ENCODE measurements at regions of chr18 and their contacts with region 1.

Region 1: DNA sequence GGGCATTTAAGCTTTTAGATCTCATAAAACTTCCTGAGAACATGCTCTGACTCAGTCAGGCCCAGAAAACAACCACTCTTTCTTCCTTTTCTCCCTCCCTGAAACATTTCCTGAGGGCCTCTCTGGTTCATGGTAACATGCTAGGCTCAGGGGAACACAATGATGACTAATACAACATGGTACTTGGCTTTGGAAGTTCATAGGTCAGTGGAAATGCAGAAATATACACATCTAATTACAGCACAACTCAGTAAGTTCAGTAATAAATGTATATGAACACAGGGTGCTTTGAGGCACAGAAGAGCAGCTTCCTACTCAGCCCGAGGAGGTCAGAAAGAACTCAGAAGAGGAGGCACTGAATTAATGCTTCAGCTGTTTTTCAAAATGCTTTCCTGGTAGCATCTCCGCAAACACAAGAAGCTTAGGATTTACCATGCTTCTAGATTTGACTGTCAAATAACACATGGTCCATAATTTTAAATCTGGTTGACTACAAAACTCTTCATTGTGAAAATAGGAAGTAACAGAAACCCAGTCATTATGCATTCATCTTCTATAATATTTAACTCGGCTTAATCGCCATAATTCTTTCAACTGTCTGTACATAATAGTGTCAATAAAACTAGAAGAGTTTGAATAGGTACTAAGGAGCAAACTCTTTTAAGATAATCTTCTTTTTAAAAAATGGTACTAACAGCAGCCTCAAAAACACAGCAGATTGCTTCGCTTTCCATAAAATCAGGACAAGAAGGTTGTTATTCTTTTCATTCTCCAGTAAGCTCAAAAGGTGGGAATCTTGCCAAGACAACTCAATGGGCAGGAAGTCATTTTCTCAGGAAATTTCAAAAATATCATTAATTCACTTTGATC is 251.3 kb downstream of the DLGAP1 start:
- DNase-seq: peak; percentile 88
- H3K4me3 ChIP-seq: no peak overlapping the region
- H3K27ac ChIP-seq: peak overlapping the region; percentile 10
- H3K4me1 ChIP-seq: peaks cover 30% of the 10 kb centered on the region
- H3K27me3 ChIP-seq: no peaks in the 10 kb centered on the region
- CTCF ChIP-seq: no peak

Region 2: DNA sequence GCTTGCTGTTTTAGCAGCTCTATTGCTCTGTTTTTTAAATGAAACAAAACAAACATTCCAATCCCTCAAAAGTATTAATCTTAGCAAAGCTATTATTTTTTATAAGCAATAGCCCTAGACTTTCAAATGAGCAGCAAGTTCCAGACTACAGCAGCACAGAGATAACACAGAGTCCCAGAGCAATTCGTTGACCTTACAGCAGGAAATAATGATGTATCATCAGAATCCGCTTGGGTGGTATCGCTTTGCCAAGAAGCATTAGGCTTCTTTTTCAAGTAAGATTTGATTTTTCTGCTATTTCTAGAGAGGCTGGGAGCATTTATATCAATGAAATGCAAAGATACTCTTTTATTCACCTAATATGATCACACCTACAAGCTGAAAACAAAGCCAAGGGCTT is 41.7 kb after region 1 on chr18:
- CTCF ChIA-PET with region 1: no interaction called
- POLR2A ChIA-PET with region 1: interaction called, 12 read pairs
- intact Hi-C with region 1: no loop called
- DNase-seq: no peak
- H3K4me3 ChIP-seq: no peak overlapping the region
- H3K27ac ChIP-seq: no peak overlapping the region
- H3K4me1 ChIP-seq: peaks cover 10% of the 10 kb centered on the region
- H3K27me3 ChIP-seq: no peaks in the 10 kb centered on the region
- CTCF ChIP-seq: no peak